ENCODE measurements at regions of chr6 and their contacts with region 1.

Region 1: DNA sequence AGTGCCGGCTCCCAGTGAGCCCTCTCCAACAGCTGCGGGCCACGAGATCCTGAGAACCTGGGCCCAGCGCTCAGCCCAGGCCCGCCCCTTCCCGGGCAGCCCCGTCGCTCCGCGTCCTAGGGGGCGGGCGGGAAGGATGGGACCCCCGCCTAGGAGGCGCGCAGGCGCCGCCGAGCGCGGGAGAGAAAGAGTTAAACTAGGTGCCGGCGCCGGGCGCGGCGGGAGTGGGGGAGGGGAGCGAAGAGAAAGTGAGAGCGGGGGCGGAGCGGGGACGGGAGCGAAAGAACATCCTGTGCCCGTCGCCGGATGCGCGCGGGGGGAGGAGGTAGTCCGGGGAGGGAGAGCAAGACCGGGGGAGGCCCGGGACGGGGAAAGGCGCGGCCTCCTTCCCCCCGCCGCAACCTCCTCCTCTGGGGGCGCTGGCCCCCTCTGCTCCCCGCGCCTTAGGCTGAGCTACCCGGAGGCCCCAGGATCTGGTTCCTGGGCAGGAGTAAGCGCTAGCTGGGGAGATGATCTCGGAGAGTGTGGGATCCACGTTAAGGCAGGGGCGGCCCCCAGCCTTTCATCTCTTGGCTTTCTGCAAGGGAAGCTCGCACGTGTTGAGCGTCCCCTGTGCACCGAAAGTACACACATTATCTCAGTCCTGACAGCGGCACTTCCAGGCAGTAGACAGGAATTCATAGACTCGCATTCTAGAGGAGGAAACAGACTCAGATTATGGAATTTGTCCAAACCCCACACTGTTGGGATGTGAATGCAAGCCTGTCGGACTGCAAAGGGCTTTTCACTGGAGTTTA is 4.9 kb upstream of the ARMC12 start:
- DNase-seq: peak; percentile 95 to 98
- H3K4me3 ChIP-seq: peak overlapping the region; percentile 43 to 70 (median 56)
- H3K27ac ChIP-seq: peak overlapping the region; percentile 98 to 100 (median 100)
- H3K4me1 ChIP-seq: peaks cover 71 to 92% (median 85%) of the 10 kb centered on the region in 4 donors
- H3K27me3 ChIP-seq: no peaks in the 10 kb centered on the region
- CTCF ChIP-seq: no peak
- EP300 ChIP-seq: peak; percentile 96
- POLR2A ChIP-seq: peak in 1 of 4 donors; percentile 4

Region 2: DNA sequence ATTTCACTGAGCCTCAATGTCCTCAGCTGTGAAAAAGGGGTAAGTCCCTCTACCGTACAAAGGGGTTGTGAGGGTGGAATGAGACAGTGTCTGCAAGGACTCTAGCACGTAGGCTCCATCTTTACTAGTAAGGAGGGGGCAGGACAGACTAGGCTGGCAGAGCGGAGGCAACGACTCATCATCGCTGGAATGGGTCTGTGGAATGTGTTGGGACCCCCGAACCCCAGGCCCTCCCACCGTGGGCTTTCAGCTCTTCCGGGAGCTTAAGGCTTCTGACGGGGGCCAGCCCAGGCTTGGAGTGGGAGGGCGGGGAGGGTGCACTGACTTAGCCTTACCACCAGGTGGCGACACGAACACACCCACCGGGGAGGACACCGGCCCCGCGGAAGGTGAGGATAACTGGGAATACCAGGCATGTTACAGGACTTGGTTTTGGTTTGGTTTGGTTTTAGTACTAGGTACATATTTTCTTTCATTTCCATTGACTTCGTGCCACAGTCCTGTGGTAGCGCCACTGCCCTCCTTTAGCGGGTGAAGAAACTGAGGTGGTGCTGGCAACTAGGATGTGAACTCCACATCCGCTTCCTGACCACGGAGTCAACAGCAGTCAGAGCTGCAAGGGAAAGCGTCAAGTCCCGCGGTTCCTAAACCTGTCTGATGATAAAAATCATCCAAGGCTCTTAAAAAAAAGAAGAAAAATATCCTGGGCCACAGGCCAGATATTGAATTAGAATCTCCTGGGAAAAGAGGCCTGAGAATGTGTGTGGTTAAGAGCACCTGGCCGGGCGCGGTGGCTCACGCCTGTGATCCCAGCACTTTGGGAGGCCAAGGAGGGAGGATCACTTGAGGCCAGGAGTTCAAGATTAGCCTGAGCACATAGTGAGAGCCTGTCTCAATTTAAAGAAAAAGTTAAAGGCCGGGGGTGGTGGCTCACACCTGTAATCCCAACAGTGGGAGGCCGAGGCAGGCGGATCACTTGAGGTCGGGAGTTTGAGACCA is 209.0 kb before region 1 on chr6:
- intact Hi-C with region 1: loop called (anchors 2 kb)
- DNase-seq: peak; percentile 81 to 87
- H3K4me3 ChIP-seq: peak overlapping the region in 3 of 4 donors; percentile 10 to 13 (median 12)
- H3K27ac ChIP-seq: no peak overlapping the region
- H3K4me1 ChIP-seq: peaks cover 0 to 13% (median 6%) of the 10 kb centered on the region in 4 donors
- H3K27me3 ChIP-seq: no peaks in the 10 kb centered on the region
- CTCF ChIP-seq: peak in 5 of 7 experiments; percentile 82 to 100 (median 98)
- EP300 ChIP-seq: no peak
- POLR2A ChIP-seq: no peak

Region 3: DNA sequence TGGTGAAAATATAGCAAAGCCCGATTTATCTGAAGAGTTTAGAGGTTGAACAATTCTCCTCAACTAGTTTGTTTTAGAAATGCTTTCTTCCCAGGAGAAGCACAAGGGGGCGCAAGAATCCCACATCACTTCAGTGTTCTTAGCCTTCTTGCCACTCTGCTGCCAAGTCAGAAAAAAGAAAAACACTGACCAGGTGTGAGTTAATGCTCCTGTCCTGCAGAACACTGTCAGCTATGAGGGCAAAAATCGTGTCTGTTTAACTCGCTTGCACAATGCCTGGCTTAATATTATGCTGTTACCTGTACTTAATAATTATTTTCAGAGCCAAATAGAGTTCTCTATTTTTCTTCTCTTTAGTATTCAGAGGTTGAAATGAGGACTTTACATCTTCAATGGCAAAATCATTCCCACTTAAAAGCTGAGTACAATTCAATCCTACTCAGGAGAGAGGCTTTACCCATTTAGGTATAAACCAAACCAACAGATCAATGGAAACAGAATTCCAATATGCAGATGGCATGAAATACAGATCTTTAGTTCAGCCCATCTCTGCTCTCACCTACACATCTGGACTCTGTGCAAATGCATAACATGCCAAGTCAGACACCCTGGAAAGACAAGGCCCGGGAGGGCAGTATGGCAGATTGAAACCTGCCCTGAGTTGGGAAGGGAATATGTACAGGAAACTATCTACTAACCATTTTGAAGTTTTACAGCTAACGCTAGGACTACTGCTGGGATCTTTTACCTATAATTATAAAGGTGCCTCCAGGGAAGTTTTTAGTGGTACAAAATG is 147.8 kb before region 1 on chr6:
- intact Hi-C with region 1: loop called (anchors 5 kb)
- DNase-seq: peak; percentile 73 to 92
- H3K4me3 ChIP-seq: no peak overlapping the region
- H3K27ac ChIP-seq: peak overlapping the region in 4 of 5 donors; percentile 12 to 86 (median 59)
- H3K4me1 ChIP-seq: peaks cover 37 to 65% (median 52%) of the 10 kb centered on the region in 4 donors
- H3K27me3 ChIP-seq: no peaks in the 10 kb centered on the region
- CTCF ChIP-seq: peak in 5 of 7 experiments; percentile 59 to 87 (median 76)
- EP300 ChIP-seq: no peak
- POLR2A ChIP-seq: no peak

Region 4: GRCh38 chr6:35688581-35689322 is 43.2 kb before region 1 on chr6 and contains the start of gene FKBP5:
- intact Hi-C with region 1: loop called (anchors 5 kb)
- DNase-seq: peak; percentile 96 to 97
- H3K4me3 ChIP-seq: peak within 1 kb of the TSS; percentile 70 to 98 (median 80)
- H3K27ac ChIP-seq: peak within 1 kb of the TSS; percentile 94 to 100 (median 98)
- H3K4me1 ChIP-seq: peaks cover 32 to 58% (median 43%) of the 10 kb centered on the region in 4 donors
- H3K27me3 ChIP-seq: no peaks in the 10 kb centered on the region
- CTCF ChIP-seq: no peak
- EP300 ChIP-seq: no peak
- POLR2A ChIP-seq: peak in 1 of 4 donors; percentile 56
- total RNA-seq, gene FKBP5: 68.1 to 209 (median 168) TPM

Measured in stomach (tissue), 19 donors.